ENCODE measurements at regions of chr17 and their contacts with region 1.

Region 1: GRCh38 chr17:40531051-40531991 is 29.9 kb upstream of the TNS4 start:
- DNase-seq: peak; percentile 94
- H3K4me3 Mint-ChIP-seq: peak overlapping the region; percentile 75
- H3K27ac Mint-ChIP-seq: peak overlapping the region; percentile 94
- H3K4me1 Mint-ChIP-seq: peaks cover 67% of the 10 kb centered on the region
- H3K27me3 Mint-ChIP-seq: no peaks in the 10 kb centered on the region

Region 2: DNA sequence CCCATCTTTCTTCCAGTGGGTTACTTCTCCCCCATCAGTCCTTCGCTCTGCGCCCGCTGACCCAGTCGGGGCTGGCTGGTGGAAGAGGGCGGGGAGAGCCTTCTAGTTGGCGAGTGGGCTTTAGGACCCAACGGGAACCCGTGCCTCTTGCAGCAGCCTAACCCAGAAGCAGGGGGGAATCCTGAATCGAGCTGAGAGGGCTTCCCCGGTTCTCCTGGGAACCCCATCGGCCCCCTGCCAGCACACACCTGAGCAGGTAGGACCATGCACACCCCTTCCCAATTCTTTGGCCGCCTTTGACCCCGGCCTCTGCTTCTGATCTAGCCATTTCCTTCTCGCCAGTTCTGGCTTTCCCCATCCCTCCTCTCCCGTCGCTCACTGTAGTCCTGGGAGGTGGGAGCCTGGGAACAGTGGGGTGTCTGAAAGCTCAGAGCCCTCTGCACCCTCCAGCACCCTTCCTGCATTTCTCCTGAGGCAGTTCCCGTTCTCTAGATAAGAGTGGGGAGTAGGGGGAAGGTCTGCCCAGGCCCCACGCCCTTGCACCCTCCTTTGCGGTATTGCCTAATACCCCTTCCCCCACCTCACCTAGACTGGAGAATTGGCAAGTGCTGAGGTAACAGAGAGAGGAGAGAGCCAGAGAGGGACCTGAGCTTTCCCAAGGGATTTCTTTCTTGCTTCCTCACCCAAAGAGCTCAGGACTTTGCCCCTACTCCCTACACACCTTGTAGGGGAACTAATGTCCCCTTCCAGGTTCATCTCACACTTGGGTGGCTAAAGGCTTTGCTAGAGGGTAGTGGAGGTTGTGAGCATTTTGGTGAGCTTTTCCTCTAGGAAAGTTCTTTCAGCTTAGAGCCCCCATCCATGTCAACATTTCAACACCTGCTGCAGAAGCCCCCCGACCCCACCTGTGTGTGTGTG is 222.0 kb before region 1 on chr17 and contains the start of gene RARA:
- CTCF ChIA-PET with region 1: interaction called, 17 read pairs
- POLR2A ChIA-PET with region 1: no interaction called
- intact Hi-C with region 1: no loop called
- DNase-seq: no peak
- H3K4me3 Mint-ChIP-seq: no peak within 1 kb of the TSS
- H3K27ac Mint-ChIP-seq: no peak within 1 kb of the TSS
- H3K4me1 Mint-ChIP-seq: peaks cover 34% of the 10 kb centered on the region
- H3K27me3 Mint-ChIP-seq: no peaks in the 10 kb centered on the region
- total RNA-seq, gene RARA: 31.2 TPM

Region 3: GRCh38 chr17:40410082-40410481 is 121.2 kb before region 1 on chr17:
- CTCF ChIA-PET with region 1: interaction called, 99 read pairs
- POLR2A ChIA-PET with region 1: interaction called, 4 read pairs
- intact Hi-C with region 1: no loop called
- DNase-seq: no peak
- H3K4me3 Mint-ChIP-seq: no peak overlapping the region
- H3K27ac Mint-ChIP-seq: no peak overlapping the region
- H3K4me1 Mint-ChIP-seq: no peaks in the 10 kb centered on the region
- H3K27me3 Mint-ChIP-seq: no peaks in the 10 kb centered on the region

Region 4: DNA sequence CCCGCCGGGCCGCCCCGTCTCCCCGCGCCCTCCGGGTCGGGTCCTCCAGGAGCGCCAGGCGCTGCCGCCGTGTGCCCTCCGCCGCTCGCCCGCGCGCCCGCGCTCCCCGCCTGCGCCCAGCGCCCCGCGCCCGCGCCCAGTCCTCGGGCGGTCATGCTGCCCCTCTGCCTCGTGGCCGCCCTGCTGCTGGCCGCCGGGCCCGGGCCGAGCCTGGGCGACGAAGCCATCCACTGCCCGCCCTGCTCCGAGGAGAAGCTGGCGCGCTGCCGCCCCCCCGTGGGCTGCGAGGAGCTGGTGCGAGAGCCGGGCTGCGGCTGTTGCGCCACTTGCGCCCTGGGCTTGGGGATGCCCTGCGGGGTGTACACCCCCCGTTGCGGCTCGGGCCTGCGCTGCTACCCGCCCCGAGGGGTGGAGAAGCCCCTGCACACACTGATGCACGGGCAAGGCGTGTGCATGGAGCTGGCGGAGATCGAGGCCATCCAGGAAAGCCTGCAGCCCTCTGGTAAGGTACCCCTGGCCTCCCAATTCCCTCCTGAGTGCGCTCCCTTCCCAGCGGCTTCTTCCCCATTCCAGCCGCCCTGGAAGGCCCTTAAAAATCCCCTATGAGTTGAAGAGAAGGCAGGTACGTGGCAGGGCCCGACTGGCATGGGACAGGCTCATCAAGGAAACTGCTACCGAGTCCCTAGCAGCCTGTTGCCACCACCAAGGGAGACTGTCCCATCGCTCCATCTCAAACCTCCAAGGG is 87.6 kb before region 1 on chr17:
- CTCF ChIA-PET with region 1: interaction called, 129 read pairs
- POLR2A ChIA-PET with region 1: interaction called, 6 read pairs
- intact Hi-C with region 1: loop called (anchors 1 kb)
- DNase-seq: peak; percentile 76
- H3K4me3 Mint-ChIP-seq: peak overlapping the region; percentile 65
- H3K27ac Mint-ChIP-seq: peak overlapping the region; percentile 82
- H3K4me1 Mint-ChIP-seq: peaks cover 41% of the 10 kb centered on the region
- H3K27me3 Mint-ChIP-seq: peaks cover 1% of the 10 kb centered on the region

Region 5: DNA sequence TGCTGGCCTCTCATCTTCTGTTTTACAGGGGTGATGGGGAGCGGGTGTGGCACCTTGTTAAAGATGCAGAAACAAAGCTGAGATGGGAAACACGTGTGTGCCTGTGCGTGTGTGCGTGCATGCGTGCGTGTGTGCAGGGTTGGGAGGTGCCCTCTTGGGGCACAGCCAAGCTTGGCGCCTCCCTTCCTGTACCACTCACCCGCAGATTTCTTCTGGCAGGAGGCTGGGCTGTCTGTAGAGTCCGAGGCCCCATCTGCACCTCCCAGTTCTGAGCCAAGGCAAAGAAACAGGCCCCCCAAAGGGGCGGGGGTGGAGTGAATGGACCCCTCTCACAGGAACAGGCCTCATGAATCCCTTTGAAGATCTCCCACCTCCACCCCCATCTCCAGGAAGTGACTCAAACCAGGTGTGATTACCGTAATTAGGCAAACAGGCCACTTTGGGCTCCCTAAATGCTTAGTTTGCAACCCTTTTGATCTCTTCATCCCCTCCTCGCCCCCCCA is 50.8 kb before region 1 on chr17:
- CTCF ChIA-PET with region 1: interaction called, 93 read pairs
- POLR2A ChIA-PET with region 1: interaction called, 36 read pairs
- intact Hi-C with region 1: loop called (anchors 1 kb)
- DNase-seq: peak; percentile 95
- H3K4me3 Mint-ChIP-seq: peak overlapping the region; percentile 76
- H3K27ac Mint-ChIP-seq: peak overlapping the region; percentile 98
- H3K4me1 Mint-ChIP-seq: peaks cover 70% of the 10 kb centered on the region
- H3K27me3 Mint-ChIP-seq: no peaks in the 10 kb centered on the region

Region 6: GRCh38 chr17:40678902-40679522 is 147.7 kb after region 1 on chr17:
- CTCF ChIA-PET with region 1: no interaction called
- POLR2A ChIA-PET with region 1: no interaction called
- intact Hi-C with region 1: no loop called
- DNase-seq: no peak
- H3K4me3 Mint-ChIP-seq: no peak overlapping the region
- H3K27ac Mint-ChIP-seq: no peak overlapping the region
- H3K4me1 Mint-ChIP-seq: peaks cover 3% of the 10 kb centered on the region
- H3K27me3 Mint-ChIP-seq: peaks cover 36% of the 10 kb centered on the region

Measured in activated CD4-positive, alpha-beta memory T cell treated with anti-CD3 and anti-CD28 coated beads for 36 hours (primary cell).